ENCODE measurements at regions of chr10 and their contacts with region 1.

Region 1: GRCh38 chr10:17607603-17608332 is 9.4 kb downstream of the HACD1 start:
- DNase-seq: peak in 7 of 9 donors; percentile 16 to 62 (median 55)
- ATAC-seq: peak; percentile 92
- H3K4me3 ChIP-seq: no peak overlapping the region
- H3K4me3 Mint-ChIP-seq: no peak overlapping the region
- H3K27ac ChIP-seq: no peak overlapping the region
- H3K27ac Mint-ChIP-seq: no peak overlapping the region
- H3K4me1 ChIP-seq: no peaks in the 10 kb centered on the region
- H3K4me1 Mint-ChIP-seq: peaks cover 0 to 3% (median 0%) of the 10 kb centered on the region in 7 donors
- H3K27me3 ChIP-seq: no peaks in the 10 kb centered on the region
- H3K27me3 Mint-ChIP-seq: peaks cover 0 to 4% (median 0%) of the 10 kb centered on the region in 5 donors

Region 2: DNA sequence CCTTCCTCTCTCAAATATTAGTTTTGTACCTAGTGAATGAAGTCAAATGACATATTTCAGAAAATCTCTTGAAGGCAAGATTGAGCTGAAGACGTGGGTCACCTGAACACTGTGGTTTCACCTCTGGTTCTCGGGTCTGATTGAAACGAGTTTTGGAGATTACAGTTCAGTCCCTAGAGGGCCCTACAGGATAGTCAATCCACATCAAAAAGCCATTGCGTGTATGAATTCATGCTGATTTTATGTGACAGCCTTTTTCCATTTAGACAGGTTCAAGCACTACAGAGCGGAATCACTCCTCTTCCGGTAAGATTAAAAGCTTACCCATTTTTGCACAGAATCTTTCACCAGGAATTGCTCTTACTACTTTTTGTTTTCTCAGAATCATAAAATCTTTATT is 317.5 kb before region 1 on chr10:
- CTCF ChIA-PET with region 1: no interaction called
- POLR2A ChIA-PET with region 1: no interaction called
- intact Hi-C with region 1: loop called in 1 of 2 experiments (anchors 1 kb)
- DNase-seq: peak in 6 of 9 donors; percentile 18 to 46 (median 30)
- ATAC-seq: peak; percentile 34
- H3K4me3 ChIP-seq: no peak overlapping the region
- H3K4me3 Mint-ChIP-seq: no peak overlapping the region
- H3K27ac ChIP-seq: no peak overlapping the region
- H3K27ac Mint-ChIP-seq: no peak overlapping the region
- H3K4me1 ChIP-seq: no peaks in the 10 kb centered on the region
- H3K4me1 Mint-ChIP-seq: peaks cover 0 to 8% (median 4%) of the 10 kb centered on the region in 7 donors
- H3K27me3 ChIP-seq: no peaks in the 10 kb centered on the region
- H3K27me3 Mint-ChIP-seq: peaks cover 0 to 24% (median 18%) of the 10 kb centered on the region in 5 donors

Region 3: DNA sequence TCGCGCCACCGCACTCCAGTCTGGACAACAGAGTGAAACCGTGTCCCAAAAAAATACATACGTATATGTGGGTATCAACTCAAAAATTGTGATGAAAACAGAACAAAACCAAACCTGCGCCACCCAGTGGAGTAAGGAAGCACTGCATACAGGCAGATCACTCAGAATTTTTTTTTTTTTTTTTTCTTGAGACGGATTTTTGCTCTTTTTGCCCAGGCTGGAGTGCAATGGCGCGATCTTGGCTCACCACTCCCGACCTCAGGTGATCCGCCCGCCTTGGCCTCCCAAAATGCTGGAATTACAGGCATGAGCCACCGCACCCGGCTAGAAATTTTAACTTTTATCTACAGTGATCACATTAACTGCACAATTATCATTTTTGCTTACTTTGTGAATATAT is 135.2 kb after region 1 on chr10:
- CTCF ChIA-PET with region 1: interaction called, 8 read pairs
- POLR2A ChIA-PET with region 1: no interaction called
- intact Hi-C with region 1: loop called (anchors 1 kb)
- DNase-seq: peak; percentile 19 to 66 (median 56)
- ATAC-seq: peak; percentile 75
- H3K4me3 ChIP-seq: no peak overlapping the region
- H3K4me3 Mint-ChIP-seq: no peak overlapping the region
- H3K27ac ChIP-seq: no peak overlapping the region
- H3K27ac Mint-ChIP-seq: no peak overlapping the region
- H3K4me1 ChIP-seq: no peaks in the 10 kb centered on the region
- H3K4me1 Mint-ChIP-seq: peaks cover 3 to 15% (median 5%) of the 10 kb centered on the region in 7 donors
- H3K27me3 ChIP-seq: no peaks in the 10 kb centered on the region
- H3K27me3 Mint-ChIP-seq: no peaks in the 10 kb centered on the region

Region 4: GRCh38 chr10:17872191-17873091 is 264.7 kb after region 1 on chr10:
- CTCF ChIA-PET with region 1: no interaction called
- POLR2A ChIA-PET with region 1: no interaction called
- intact Hi-C with region 1: loop called (anchors 1 to 2 kb)
- DNase-seq: peak in 1 of 9 donors; percentile 2
- ATAC-seq: no peak
- H3K4me3 ChIP-seq: no peak overlapping the region
- H3K4me3 Mint-ChIP-seq: no peak overlapping the region
- H3K27ac ChIP-seq: no peak overlapping the region
- H3K27ac Mint-ChIP-seq: no peak overlapping the region
- H3K4me1 ChIP-seq: no peaks in the 10 kb centered on the region
- H3K4me1 Mint-ChIP-seq: no peaks in the 10 kb centered on the region
- H3K27me3 ChIP-seq: no peaks in the 10 kb centered on the region
- H3K27me3 Mint-ChIP-seq: peaks cover 0 to 8% (median 0%) of the 10 kb centered on the region in 5 donors

Region 5: DNA sequence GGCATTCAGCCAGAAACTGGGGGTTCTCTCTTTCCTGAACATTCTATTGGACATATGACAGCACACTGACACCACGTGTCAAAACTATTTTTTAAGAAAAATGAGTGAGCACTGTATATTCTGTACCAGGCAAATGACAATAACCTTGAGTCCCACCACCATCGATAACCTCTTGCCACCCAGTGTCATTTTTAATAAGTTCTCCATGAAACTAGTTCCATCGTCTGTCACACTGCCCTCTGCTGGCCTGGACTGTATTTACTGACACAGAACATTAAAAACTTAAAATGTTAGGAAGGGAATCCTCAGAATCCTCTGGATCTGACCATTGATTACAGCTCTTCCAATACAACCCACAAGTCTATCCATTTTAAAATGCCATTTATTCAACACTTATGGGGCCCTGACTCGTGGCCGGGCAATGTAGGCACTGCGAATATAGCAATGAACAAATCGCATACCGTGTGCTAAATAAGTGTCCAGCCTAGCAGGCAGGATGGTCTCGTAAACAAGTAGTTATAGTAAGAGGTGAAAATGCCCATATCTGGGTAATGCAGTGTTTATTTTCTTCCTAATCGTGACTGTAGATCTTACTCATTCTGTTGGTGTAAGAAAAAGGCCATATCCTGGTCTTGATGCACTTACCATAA is 496.6 kb after region 1 on chr10:
- CTCF ChIA-PET with region 1: no interaction called
- POLR2A ChIA-PET with region 1: no interaction called
- intact Hi-C with region 1: loop called in 1 of 2 experiments (anchors 1 kb)
- DNase-seq: peak in 7 of 9 donors; percentile 0 to 28 (median 7)
- ATAC-seq: no peak
- H3K4me3 ChIP-seq: no peak overlapping the region
- H3K4me3 Mint-ChIP-seq: no peak overlapping the region
- H3K27ac ChIP-seq: no peak overlapping the region
- H3K27ac Mint-ChIP-seq: no peak overlapping the region
- H3K4me1 ChIP-seq: no peaks in the 10 kb centered on the region
- H3K4me1 Mint-ChIP-seq: no peaks in the 10 kb centered on the region
- H3K27me3 ChIP-seq: no peaks in the 10 kb centered on the region
- H3K27me3 Mint-ChIP-seq: peaks cover 0 to 5% (median 4%) of the 10 kb centered on the region in 5 donors

Region 6: GRCh38 chr10:18214691-18215563 is 607.2 kb after region 1 on chr10:
- CTCF ChIA-PET with region 1: no interaction called
- POLR2A ChIA-PET with region 1: no interaction called
- intact Hi-C with region 1: loop called in 1 of 2 experiments (anchors 5 kb)
- DNase-seq: no peak
- ATAC-seq: peak; percentile 45
- H3K4me3 ChIP-seq: no peak overlapping the region
- H3K4me3 Mint-ChIP-seq: no peak overlapping the region
- H3K27ac ChIP-seq: no peak overlapping the region
- H3K27ac Mint-ChIP-seq: no peak overlapping the region
- H3K4me1 ChIP-seq: no peaks in the 10 kb centered on the region
- H3K4me1 Mint-ChIP-seq: no peaks in the 10 kb centered on the region
- H3K27me3 ChIP-seq: no peaks in the 10 kb centered on the region
- H3K27me3 Mint-ChIP-seq: peaks cover 0 to 14% (median 10%) of the 10 kb centered on the region in 5 donors